Cardiac septum (tissue), 1 donor: ENCODE measurements at regions of chr10 and their contacts with region 1.

Region 1: GRCh38 chr10:44864637-44865288 is 46.4 kb upstream of the TMEM72 start:
- DNase-seq: peak; percentile 94

Region 2: DNA sequence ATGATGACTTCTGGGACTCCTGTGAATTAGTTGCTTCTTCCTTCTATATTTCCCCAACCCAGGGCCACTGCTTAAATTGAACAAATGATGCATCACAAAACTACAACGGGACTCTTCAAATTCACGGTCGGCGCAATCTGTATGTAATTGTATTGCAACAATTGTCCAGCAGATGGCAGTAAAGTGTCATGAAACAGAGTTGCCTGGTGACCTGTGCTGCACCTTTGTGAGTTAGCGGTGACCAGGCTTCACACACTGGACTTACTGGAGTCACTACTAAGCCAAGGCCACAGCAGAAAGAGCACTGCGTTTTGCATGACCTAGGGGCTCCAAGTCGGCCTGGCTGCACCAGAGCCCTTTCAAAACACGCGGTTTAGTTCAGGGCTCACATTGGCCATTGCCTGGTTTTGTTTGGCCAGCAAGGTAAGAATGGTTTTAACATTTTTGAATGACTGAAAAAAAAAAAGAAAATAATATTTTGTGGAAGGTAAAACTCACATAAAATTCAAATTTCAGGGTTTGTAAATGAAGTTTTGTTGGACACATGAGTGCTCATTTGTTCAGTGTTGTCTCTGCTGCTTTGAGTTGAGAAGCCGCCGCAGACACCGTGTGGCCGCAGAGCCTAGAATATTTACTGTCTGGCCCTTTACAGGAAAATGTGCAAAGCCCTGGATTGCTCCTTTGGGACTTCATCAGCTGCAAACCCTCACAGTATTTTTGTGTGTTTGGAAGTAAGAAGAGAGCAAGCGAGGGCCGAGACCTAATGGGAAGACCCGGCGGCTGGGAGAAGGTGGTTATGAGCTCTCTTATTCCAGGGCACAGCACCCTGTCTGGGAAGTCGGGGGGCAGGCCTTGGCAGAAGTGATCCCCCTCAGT is 1192.9 kb before region 1 on chr10:
- intact Hi-C with region 1: loop called (anchors 2 kb)
- DNase-seq: no peak

Region 3: DNA sequence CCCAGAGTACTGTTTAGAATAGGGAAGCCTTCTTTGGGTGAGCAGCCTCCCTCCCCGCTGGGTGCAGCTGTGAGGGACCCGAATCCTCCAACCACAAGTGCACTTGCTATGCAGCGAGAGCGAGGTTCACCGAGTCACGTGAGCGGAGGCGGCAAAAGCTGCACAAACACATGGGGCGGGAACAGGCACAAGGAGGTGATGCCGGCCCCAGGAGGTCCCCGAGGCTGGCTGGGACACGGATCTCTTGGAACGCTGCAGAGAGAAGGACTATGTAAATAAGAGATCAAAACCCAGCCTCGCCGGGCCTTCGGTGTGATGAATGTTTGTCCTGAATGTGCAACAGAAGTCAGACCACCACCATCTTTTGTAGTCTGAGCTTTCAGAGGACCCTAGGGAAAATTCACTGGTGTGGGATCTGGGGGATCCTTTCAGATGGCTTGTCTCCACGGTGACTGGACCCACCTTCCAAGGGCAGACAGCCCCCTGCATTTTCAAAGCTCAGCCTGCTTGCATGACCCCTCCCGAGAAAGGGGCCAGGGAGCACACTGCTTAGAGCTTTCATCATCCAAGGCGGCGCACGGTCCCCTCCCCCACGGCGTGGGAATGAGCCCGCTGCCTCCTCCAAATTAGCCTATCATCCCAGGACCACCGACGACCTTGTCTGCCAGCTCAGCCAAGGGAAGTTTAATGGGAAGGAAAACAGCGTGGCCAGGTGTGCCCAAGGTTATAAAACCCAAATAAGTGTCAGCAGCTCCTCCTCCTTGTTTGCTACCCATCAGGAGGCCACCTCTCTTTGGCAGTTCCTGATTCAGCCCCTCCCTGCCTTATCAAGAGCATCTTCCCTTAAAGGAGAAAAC is 807.6 kb before region 1 on chr10:
- intact Hi-C with region 1: loop called (anchors 5 kb)
- DNase-seq: no peak

Region 4: GRCh38 chr10:44393051-44393630 is 471.6 kb before region 1 on chr10:
- intact Hi-C with region 1: loop called (anchors 2 kb)
- DNase-seq: peak; percentile 60

Region 5: GRCh38 chr10:44478876-44479705 is 385.7 kb before region 1 on chr10:
- intact Hi-C with region 1: loop called (anchors 5 kb)
- DNase-seq: no peak